Mammary epithelial cell (primary cell): ENCODE measurements at regions of chr21 and their contacts with region 1.

Region 1: DNA sequence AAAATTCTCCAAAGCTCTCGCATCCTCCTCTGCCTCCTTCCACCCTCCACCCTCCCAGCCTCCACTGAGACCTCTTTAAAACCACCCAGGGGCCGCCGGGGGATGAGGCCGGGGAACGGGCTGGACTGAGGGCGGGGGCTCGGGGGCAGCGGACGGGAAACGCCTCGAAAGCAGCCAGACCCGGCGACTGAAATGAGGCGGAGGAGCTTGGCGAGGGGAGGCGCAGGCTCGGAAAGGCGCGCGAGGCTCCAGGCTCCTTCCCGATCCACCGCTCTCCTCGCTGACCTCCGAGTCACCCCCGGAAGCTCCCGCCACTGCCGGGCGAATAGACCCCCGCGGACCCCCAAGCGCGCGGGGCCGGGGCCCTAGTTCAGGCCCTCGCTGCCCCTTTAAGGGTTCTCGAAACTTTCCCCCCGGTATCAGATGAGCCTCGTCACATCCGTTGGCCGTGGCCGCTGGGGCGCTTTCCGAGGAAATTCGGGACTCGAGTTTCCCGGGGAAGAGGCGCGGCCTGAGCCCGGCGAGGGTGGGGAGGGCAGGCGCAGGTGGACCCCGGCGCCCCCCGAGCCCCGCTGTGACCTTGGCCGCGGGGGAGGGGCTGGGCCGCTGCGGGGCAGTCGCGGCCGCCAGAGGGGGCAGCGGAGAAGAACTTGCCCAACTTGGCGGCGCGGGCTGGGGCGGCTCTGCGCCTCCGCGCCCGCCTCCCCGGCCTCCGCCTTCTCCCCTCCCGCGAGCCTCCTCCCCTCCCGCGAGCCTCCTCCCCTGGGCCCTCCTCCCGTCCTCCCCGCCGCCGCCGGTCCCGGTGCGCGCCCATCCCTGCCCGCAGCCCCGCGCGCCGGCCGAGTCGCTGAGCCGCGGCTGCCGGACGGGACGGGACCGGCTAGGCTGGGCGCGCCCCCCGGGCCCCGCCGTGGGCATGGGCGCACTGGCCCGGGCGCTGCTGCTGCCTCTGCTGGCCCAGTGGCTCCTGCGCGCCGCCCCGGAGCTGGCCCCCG is at the start of gene BACE2:
- DNase-seq: peak; percentile 79
- H3K4me3 ChIP-seq: peak within 1 kb of the TSS; percentile 77 to 83 (median 82)
- H3K27ac ChIP-seq: peak within 1 kb of the TSS; percentile 93
- H3K4me1 ChIP-seq: peaks cover 43% of the 10 kb centered on the region
- H3K27me3 ChIP-seq: no peaks in the 10 kb centered on the region
- CTCF ChIP-seq: peak; percentile 15 to 50
- total RNA-seq, gene BACE2: 84.4 to 128 TPM

Region 2: DNA sequence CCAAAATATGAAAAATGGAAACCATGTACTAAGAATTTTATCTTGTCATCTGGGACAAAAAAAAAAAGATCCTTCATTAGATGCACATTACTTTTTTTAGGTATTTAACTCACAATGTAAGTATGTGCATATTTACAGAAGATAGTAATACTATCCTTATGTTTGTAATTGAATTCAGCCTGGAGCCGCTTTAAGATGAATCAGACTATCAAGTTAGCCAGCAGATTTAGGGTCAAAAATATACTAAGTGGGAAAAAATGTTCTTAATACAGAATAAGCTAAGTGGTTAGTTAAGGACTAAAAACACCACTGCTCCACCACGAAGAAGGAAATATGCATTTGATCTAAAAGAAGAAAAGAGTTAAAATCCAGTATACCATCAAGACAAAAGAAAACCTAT is 369.8 kb before region 1 on chr21:
- CTCF ChIA-PET with region 1: no interaction called
- dilution Hi-C with region 1: no loop called
- in situ Hi-C with region 1: no loop called
- intact Hi-C with region 1: no loop called
- DNase-seq: no peak
- H3K4me3 ChIP-seq: no peak overlapping the region
- H3K27ac ChIP-seq: no peak overlapping the region
- H3K4me1 ChIP-seq: no peaks in the 10 kb centered on the region
- H3K27me3 ChIP-seq: no peaks in the 10 kb centered on the region
- CTCF ChIP-seq: no peak

Region 3: DNA sequence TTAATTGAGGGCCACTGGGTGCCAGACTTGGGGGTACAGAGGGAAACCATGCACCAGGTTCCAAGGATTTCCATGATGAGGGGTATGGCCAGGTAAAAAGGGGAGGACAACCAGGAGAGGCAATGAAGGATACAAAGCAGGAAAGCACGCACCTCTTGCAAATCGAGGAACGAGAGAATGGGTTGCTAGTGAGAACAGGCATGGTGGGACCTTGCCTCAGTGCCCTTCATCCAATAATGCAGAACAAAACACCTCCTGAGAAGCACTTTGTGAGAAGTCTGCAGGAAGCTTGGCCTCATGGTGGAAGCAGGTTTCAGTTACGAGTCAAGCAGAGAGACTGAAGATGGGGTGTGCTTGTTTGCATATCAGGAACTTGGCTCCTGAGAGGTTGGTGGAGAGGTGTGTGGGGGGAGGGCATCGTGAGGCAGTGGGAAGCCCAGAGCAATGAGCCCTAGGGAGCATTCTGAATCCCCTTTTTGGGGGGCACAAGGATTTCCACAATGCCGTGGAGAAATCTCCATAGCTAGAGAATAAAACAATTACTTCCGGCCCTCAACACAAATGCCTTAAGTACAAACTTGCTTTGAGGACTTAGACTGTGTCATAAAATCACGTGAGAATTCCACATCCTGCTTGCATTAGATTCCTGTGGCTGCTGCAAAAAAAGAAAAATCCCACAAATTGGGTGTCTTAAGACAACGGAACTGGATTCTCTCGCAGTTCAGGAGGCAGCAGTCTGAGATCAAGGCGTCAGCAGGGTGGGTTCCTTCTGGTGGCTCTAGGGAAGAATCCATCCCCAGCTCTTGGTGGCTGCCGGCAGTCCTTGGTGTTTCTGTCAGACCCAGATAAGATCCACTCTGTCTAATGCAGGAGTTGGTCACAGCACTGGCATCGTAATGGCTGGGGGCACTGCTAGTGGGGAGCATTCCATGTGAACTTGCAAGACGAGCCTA is 54.6 kb before region 1 on chr21:
- CTCF ChIA-PET with region 1: interaction called, 3 read pairs
- dilution Hi-C with region 1: no loop called
- in situ Hi-C with region 1: no loop called
- intact Hi-C with region 1: loop called (anchors 2 kb)
- DNase-seq: peak; percentile 96
- H3K4me3 ChIP-seq: peak overlapping the region; percentile 4 to 44 (median 23)
- H3K27ac ChIP-seq: peak overlapping the region; percentile 77
- H3K4me1 ChIP-seq: peaks cover 20% of the 10 kb centered on the region
- H3K27me3 ChIP-seq: no peaks in the 10 kb centered on the region
- CTCF ChIP-seq: no peak

Region 4: DNA sequence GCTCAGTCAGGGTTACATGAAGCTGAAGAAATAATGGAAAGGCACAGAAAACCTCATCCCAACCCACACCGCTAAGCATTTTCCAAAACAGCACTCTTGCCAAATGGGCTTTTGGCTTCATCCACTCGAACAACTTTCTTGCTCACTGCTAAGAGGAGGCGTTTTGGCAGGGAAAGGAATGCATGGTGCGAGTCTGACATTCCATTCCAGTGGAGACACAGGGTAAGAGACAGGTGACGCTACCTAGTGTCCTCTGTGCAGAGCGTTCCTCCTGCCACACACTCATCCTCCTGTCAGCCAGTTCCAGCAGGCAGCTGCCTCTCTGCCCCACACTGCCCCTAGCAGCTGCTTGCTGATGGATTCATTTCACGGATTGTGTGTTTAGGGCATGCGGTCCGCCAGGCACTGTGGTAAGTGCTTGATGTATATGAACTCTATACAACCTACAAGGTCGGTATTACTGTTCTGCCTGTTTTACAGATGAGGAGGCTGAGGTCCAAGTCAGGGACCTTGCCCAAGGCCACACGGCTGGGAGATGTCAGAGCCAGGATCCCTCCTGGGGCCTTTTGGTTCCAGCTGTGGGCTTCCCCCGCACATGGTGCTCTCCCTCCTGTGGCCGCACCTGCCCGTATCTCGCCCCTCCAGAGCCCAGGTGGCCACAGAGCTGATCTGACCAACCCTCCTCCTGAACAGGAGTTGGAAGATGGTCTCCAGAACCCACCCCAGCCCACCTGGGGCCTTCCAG is 25.4 kb before region 1 on chr21:
- CTCF ChIA-PET with region 1: interaction called, 3 read pairs
- dilution Hi-C with region 1: no loop called
- in situ Hi-C with region 1: no loop called
- intact Hi-C with region 1: loop called (anchors 1 kb)
- DNase-seq: peak; percentile 92
- H3K4me3 ChIP-seq: no peak overlapping the region
- H3K27ac ChIP-seq: peak overlapping the region; percentile 6
- H3K4me1 ChIP-seq: peaks cover 28% of the 10 kb centered on the region
- H3K27me3 ChIP-seq: no peaks in the 10 kb centered on the region
- CTCF ChIP-seq: peak; percentile 10 to 46

Region 5: DNA sequence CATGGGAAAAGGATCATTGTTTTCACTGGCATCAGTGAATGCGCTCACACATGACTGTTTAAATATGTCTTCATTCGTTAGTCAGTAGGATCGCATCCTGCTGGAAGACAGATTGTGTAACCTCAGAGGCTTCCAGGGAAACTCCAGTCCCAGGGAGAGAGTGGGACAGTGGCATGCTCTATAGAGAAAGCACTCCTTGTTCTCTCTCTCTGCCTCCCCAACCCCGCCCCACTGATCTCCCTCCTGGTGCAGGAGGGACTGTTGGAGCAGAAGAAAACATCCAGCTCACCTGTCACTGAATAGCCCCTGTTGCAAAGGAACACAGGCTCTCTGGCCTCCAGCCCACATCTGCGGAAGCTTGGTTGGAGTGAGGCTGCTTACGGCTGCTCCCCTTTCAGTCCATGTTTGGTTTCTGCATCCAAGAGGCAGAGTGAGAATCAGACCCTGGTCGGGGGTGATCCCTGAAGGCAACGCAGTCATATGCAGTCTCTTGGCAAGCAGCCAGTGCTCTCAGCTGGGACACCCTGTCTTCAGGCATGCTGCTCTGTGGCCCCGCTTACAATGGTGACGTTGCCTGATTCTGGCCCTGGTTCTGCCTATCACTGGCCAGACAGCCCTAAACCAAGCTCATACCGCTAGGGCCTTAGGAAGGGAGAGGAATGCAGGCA is 39.9 kb after region 1 on chr21:
- CTCF ChIA-PET with region 1: no interaction called
- dilution Hi-C with region 1: loop called (anchors 5 kb)
- in situ Hi-C with region 1: no loop called
- intact Hi-C with region 1: loop called (anchors 1 kb)
- DNase-seq: peak; percentile 94
- H3K4me3 ChIP-seq: no peak overlapping the region
- H3K27ac ChIP-seq: peak overlapping the region; percentile 62
- H3K4me1 ChIP-seq: peaks cover 18% of the 10 kb centered on the region
- H3K27me3 ChIP-seq: no peaks in the 10 kb centered on the region
- CTCF ChIP-seq: no peak

Region 6: GRCh38 chr21:41217671-41218660 is 50.3 kb after region 1 on chr21:
- CTCF ChIA-PET with region 1: no interaction called
- dilution Hi-C with region 1: loop called (anchors 5 kb)
- in situ Hi-C with region 1: no loop called
- intact Hi-C with region 1: loop called (anchors 2 kb)
- DNase-seq: peak; percentile 67
- H3K4me3 ChIP-seq: no peak overlapping the region
- H3K27ac ChIP-seq: peak overlapping the region; percentile 54
- H3K4me1 ChIP-seq: peaks cover 27% of the 10 kb centered on the region
- H3K27me3 ChIP-seq: no peaks in the 10 kb centered on the region
- CTCF ChIP-seq: no peak

Region 7: GRCh38 chr21:41250194-41250918 is 82.7 kb after region 1 on chr21:
- CTCF ChIA-PET with region 1: no interaction called
- dilution Hi-C with region 1: no loop called
- in situ Hi-C with region 1: no loop called
- intact Hi-C with region 1: loop called (anchors 5 kb)
- DNase-seq: peak; percentile 66
- H3K4me3 ChIP-seq: no peak overlapping the region
- H3K27ac ChIP-seq: peak overlapping the region; percentile 53
- H3K4me1 ChIP-seq: peaks cover 26% of the 10 kb centered on the region
- H3K27me3 ChIP-seq: no peaks in the 10 kb centered on the region
- CTCF ChIP-seq: no peak

Region 8: DNA sequence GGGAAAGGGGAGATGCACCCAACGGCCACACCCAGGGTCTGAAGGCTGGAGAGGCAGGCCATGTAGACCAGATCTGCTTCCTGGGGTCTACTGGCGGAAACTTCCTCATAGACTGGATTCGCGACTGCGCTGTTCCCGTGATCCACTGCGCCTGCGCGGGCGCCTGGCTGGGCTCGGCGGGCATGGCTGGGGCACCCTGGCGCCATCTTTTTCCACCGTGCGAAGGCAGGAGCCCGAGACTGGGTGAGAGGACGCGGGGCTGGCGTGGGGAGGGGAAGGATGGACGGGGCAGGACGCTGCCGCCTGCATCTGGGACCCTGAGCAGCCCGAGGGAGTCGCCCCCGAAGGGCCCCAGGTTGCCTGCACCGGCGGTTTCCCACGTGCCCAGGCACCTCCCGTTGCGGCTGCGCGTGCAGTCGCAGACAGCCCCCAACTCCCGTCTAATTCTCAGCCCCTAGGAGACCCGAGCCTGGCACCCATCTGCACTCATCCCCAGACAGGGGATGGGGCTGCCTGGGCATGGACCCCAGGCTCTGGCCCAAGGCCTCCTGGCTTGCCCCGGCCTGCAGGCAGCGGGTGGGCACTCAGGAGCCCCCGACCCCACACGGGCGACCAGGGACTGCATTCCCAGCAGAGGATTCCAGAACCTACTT is 136.5 kb after region 1 on chr21:
- CTCF ChIA-PET with region 1: no interaction called
- dilution Hi-C with region 1: no loop called
- in situ Hi-C with region 1: no loop called
- intact Hi-C with region 1: no loop called
- DNase-seq: no peak
- H3K4me3 ChIP-seq: no peak overlapping the region
- H3K27ac ChIP-seq: no peak overlapping the region
- H3K4me1 ChIP-seq: no peaks in the 10 kb centered on the region
- H3K27me3 ChIP-seq: peaks cover 2% of the 10 kb centered on the region
- CTCF ChIP-seq: no peak

Region 9: GRCh38 chr21:41460578-41461527 is 293.2 kb after region 1 on chr21:
- CTCF ChIA-PET with region 1: no interaction called
- dilution Hi-C with region 1: no loop called
- in situ Hi-C with region 1: no loop called
- intact Hi-C with region 1: loop called (anchors 2 kb)
- DNase-seq: peak; percentile 36
- H3K4me3 ChIP-seq: no peak overlapping the region
- H3K27ac ChIP-seq: no peak overlapping the region
- H3K4me1 ChIP-seq: no peaks in the 10 kb centered on the region
- H3K27me3 ChIP-seq: no peaks in the 10 kb centered on the region
- CTCF ChIP-seq: peak; percentile 79 to 94